H1 (cell line): ENCODE measurements at regions of chr13 and their contacts with region 1.

Region 1: DNA sequence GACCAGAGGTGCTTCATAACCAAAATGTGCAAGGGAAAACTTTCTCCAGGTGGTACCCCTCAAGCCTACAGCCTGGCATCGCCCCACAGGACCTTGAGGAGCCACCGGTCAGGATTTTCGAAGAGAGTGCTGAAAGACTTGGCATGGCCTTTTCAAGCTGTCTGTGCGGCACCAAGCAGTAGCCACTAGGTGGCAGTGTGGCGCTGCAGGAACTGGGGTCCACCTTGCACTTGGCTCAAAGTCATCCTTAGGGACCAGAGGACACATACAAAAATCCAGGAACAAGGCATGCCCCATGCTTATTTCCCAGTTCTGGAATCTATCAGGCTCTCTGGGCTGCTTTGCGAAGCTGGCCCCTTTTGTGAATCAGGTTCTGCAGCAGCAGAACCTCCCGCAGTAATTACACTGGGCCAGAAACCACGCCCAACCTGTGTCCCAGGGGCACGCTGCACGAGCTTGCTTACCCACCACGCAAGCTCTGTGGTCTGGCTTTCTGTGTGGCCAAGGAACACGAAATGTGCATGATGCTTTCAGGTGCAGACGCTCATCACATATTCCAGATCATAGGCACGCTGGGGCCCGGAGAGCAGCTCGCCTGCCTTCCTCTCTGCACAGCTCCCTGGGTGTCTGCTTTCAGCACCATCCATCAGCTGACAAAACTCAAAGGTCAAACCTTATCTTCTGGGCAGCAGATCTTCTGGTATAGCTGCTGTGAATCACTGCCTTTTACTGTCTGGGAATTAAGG is 87.2 kb downstream of the SLC7A1 start:
- DNase-seq: peak; percentile 70 to 91
- H3K4me3 ChIP-seq: no peak overlapping the region
- H3K27ac ChIP-seq: no peak overlapping the region
- H3K4me1 ChIP-seq: no peaks in the 10 kb centered on the region
- H3K27me3 ChIP-seq: no peaks in the 10 kb centered on the region
- CTCF ChIP-seq: peak in 2 of 3 experiments; percentile 81 to 98; a peak in 3 of 4 replicates
- EP300 ChIP-seq: no peak
- POLR2A ChIP-seq: 0 out of 3 replicates have a peak, but pooled peaks of 1 of the 2 experiments have one; percentile 32
- RAD21 ChIP-seq: peak; percentile 92 to 93

Region 2: DNA sequence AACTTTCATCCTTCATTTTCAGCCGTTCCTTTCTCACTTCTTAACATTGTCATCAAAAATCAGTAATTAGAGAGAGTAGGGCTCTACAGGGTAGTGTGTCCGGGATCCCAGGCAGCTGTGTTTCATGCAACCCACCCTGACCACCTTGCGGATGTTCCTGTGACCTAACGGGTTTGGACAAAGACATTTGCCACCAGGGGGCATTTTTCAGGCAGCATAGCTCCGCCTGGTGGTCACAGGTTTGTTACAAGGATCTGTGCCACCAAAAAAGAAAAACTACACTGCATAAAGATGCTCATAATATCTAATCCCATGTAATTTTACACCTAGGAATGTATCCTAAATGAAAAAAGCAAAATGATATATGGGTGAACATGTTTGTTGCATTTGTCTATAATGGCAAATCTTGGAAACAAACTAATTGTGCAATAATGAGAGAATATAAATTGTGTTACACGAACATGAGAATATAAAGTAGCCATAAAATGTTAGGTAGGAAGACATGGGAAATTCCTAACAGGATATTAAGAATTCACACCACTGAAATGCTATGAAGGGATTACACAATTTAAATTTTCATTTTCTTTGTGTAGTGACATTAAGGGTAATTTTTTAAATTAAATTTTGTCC is 35.9 kb before region 1 on chr13:
- CTCF ChIA-PET with region 1: interaction called, 13 read pairs
- POLR2A ChIA-PET with region 1: interaction called, 3 read pairs
- DNase-seq: peak in 1 of 2 experiments; percentile 78
- H3K4me3 ChIP-seq: no peak overlapping the region
- H3K27ac ChIP-seq: no peak overlapping the region
- H3K4me1 ChIP-seq: no peaks in the 10 kb centered on the region
- H3K27me3 ChIP-seq: no peaks in the 10 kb centered on the region
- CTCF ChIP-seq: peak; percentile 78 to 99 (median 92)
- EP300 ChIP-seq: no peak
- POLR2A ChIP-seq: no peak
- RAD21 ChIP-seq: peak; percentile 70 to 75

Region 3: GRCh38 chr13:29496240-29496712 is 12.0 kb before region 1 on chr13:
- CTCF ChIA-PET with region 1: interaction called, 37 read pairs
- POLR2A ChIA-PET with region 1: interaction called, 23 read pairs
- DNase-seq: no peak
- H3K4me3 ChIP-seq: no peak overlapping the region
- H3K27ac ChIP-seq: no peak overlapping the region
- H3K4me1 ChIP-seq: peaks cover 0 to 3% (median 0%) of the 10 kb centered on the region in 4 experiments; a peak in 2 of 7 replicates
- H3K27me3 ChIP-seq: peaks cover 0 to 2% (median 0%) of the 10 kb centered on the region in 4 experiments; a peak in 1 of 7 replicates
- CTCF ChIP-seq: no peak
- EP300 ChIP-seq: no peak
- POLR2A ChIP-seq: no peak
- RAD21 ChIP-seq: no peak

Region 4: GRCh38 chr13:29537736-29538651 is 29.7 kb after region 1 on chr13:
- CTCF ChIA-PET with region 1: interaction called, 16 read pairs
- POLR2A ChIA-PET with region 1: interaction called, 3 read pairs
- DNase-seq: no peak
- H3K4me3 ChIP-seq: no peak overlapping the region
- H3K27ac ChIP-seq: no peak overlapping the region
- H3K4me1 ChIP-seq: peaks cover 2 to 9% (median 6%) of the 10 kb centered on the region in 4 experiments; a peak in 6 of 7 replicates
- H3K27me3 ChIP-seq: no peaks in the 10 kb centered on the region
- CTCF ChIP-seq: no peak
- EP300 ChIP-seq: no peak
- POLR2A ChIP-seq: no peak
- RAD21 ChIP-seq: no peak

Region 5: GRCh38 chr13:29693275-29693961 is 185.1 kb after region 1 on chr13:
- CTCF ChIA-PET with region 1: interaction called, 10 read pairs
- POLR2A ChIA-PET with region 1: no interaction called
- DNase-seq: no peak
- H3K4me3 ChIP-seq: no peak overlapping the region
- H3K27ac ChIP-seq: no peak overlapping the region
- H3K4me1 ChIP-seq: no peaks in the 10 kb centered on the region; a peak in 1 of 7 replicates
- H3K27me3 ChIP-seq: no peaks in the 10 kb centered on the region
- CTCF ChIP-seq: no peak
- EP300 ChIP-seq: no peak
- POLR2A ChIP-seq: no peak
- RAD21 ChIP-seq: no peak